WTC11 (cell line): ENCODE measurements at regions of chr15 and their contacts with region 1.

Region 1: DNA sequence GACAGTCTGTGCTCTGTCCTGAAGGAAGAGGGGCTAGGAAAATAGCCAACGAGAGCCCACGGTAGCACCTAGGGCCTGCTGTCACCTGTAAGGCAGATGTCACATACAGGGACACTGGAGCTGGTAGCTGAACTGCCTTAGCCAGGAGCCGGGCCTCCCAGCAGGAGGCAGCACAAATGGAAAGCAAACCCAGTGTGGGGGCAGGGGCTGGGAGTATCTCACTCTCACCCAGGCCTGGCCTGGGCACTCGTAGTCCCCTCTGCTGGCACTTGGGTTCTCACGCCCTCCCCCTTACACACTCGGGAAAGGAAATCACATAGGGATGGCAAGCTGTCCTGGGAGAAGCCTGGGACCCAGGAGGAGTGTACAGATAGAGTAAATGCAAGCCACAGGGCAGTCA is 173.1 kb upstream of the CHRNA7 start:
- DNase-seq: peak; percentile 44
- ATAC-seq: peak; percentile 80
- H3K4me3 Mint-ChIP-seq: no peak overlapping the region
- H3K27ac Mint-ChIP-seq: no peak overlapping the region
- H3K4me1 Mint-ChIP-seq: peaks cover 19% of the 10 kb centered on the region
- H3K27me3 Mint-ChIP-seq: no peaks in the 10 kb centered on the region
- CTCF ChIP-seq: no peak

Region 2: DNA sequence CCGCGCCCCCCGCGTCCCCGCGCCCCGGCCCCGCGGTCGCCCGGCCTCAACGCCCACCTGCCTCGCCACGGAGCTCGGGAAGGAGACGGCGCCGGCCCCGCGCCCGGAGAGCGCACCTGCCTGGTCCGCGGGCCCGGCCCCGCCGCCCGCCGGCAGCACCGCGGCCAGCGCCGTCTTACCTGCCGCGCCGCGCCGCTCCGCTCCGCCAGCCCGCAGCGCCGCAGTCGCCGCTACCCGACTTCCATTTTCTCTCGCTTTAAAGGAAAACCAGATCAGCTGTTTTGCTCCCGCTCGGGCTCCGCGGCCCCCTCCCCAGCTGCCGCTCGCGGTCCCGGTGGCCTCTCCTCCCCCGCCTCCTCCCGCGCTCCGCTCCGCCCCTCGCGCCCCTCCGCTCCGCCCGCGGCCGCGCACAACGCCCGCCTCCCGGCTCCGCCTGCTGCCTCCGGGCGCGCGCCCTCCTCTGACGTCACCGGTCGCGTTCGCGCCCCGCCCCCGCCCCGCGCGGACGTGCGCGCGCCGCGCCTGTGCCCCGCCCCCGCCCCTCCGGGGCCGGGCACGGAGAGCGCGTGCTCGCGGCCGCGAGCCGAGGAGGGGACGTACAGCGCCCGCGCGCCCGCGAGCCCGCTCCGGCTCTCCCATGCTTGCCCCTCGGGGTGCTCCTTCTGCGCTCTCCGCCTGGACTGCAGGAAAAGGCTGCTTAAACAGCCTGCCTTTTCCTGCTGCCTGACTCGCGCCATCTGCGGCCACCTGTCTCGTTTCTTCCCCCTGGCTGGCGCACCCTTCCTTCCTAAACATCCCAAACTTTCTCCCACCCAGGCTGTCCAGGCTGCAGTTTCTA is 13.4 kb after region 1 on chr15:
- CTCF ChIA-PET with region 1: interaction called, 12 read pairs
- POLR2A ChIA-PET with region 1: no interaction called
- DNase-seq: peak; percentile 84
- ATAC-seq: peak; percentile 82
- H3K4me3 Mint-ChIP-seq: peak within 1 kb of the TSS; percentile 78
- H3K27ac Mint-ChIP-seq: peak within 1 kb of the TSS; percentile 86
- H3K4me1 Mint-ChIP-seq: peaks cover 18% of the 10 kb centered on the region
- H3K27me3 Mint-ChIP-seq: peaks cover 20% of the 10 kb centered on the region
- CTCF ChIP-seq: no peak